Activated CD8-positive, alpha-beta memory T cell treated with anti-CD3 and anti-CD28 coated beads, Interleukin-2, amount 10 ng/mL, durations not matched to agents 7 days and 5 days (primary cell): ENCODE measurements at regions of chr19 and their contacts with region 1.

Region 1: DNA sequence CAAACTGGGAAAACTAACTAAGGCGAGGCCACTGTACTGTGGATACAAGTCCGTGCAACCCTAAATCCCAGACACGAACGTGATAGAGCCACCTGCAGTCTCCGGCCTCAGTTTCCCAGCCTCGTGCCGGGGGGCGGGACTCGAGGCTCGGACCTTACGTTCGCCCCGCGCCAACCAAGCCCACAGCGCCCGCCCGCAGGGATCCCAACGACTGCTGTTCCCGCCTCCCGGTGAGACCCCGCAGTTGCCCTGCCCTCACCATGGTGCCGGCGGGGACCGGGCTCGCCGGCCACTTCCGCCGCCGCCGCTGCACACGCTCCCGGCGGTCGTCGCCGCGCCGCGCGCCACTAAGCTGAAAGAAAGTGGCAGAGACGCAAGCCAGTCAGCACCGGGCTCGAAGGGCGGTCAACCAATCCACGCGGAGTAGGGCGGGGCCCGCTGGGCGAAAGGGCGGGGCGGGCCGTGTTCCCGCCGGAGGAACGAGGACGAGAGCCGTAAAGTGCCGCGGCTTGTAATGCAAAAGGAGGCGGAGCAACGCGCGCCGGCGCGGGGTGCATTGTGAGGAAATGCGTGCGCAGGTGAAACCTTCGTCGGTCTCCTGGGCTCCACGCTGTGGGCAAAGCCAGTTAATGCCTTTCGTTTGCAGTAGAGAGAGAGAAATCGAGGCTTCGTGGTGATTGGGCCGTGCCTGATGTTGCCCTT is at the start of gene LSM4:
- DNase-seq: peak; percentile 100
- ATAC-seq: peak; percentile 95
- H3K4me3 Mint-ChIP-seq: peak within 1 kb of the TSS; percentile 92
- H3K27ac Mint-ChIP-seq: peak within 1 kb of the TSS; percentile 97
- H3K4me1 Mint-ChIP-seq: peaks cover 55% of the 10 kb centered on the region
- H3K27me3 Mint-ChIP-seq: no peaks in the 10 kb centered on the region
- total RNA-seq, gene LSM4: 209 to 236 TPM

Region 2: DNA sequence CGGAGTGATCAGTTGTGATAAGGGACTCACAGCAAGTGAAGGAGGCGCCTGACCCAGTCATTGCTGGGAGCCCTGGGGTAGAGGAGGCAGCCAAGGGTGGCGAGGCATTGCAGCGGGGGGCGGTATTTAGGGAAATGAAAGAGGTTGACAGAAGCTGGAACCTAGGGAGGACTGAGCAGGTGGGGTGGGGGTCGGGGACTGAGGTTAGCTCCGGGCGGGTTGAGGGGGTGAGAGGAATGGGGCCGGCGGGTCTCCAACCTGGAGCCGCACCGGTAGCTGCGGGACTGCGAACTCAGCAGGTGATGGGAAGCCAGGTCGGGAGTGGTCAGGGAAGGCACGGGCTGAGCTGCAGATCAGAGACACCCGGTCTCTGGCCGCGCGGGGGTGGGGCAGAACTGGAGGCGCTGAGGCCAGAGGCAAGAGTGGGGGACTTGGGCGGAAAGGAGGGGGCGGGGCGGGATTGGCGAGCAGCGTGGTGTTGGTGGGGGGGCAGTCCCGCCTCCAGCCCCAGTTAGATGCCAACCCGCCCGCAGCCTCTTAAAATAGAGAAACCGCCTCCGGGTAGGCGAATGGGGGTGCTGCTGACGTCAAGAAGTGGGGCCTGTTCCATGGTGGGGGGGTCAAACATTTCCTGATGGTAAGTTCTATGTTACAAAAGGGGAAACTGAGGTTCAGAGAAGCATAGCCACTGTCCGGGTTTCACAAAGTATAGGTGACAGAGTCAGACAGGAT is 223.9 kb before region 1 on chr19:
- CTCF ChIA-PET with region 1: no interaction called
- DNase-seq: peak; percentile 63
- ATAC-seq: peak; percentile 16
- H3K4me3 Mint-ChIP-seq: peak overlapping the region; percentile 78
- H3K27ac Mint-ChIP-seq: no peak overlapping the region
- H3K4me1 Mint-ChIP-seq: peaks cover 28% of the 10 kb centered on the region
- H3K27me3 Mint-ChIP-seq: no peaks in the 10 kb centered on the region

Region 3: DNA sequence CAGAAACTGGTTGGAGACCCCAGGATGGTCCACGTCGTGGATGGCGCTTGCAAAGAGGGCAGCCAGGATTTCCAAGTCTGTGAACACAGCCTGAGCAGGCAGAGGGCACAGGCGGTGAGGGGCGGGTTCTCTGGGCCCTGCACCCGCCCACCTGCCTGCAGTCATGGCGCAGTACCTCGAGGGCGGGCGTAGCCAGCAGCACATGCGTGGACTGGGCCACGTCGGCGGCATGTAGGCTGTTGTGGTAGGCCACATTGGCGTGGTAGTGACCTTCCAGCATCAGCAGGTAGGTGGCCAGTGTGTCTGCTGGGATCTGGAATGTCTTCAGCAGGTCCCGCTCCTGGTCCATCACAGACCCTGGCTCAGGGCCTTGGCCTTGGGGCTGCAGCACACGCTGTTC is 104.8 kb before region 1 on chr19:
- CTCF ChIA-PET with region 1: no interaction called
- DNase-seq: no peak
- ATAC-seq: no peak
- H3K4me3 Mint-ChIP-seq: no peak overlapping the region
- H3K27ac Mint-ChIP-seq: no peak overlapping the region
- H3K4me1 Mint-ChIP-seq: peaks cover 10% of the 10 kb centered on the region
- H3K27me3 Mint-ChIP-seq: peaks cover 24% of the 10 kb centered on the region

Region 4: GRCh38 chr19:18274781-18275356 is 48.0 kb before region 1 on chr19:
- CTCF ChIA-PET with region 1: interaction called, 399 read pairs
- DNase-seq: no peak
- ATAC-seq: no peak
- H3K4me3 Mint-ChIP-seq: no peak overlapping the region
- H3K27ac Mint-ChIP-seq: no peak overlapping the region
- H3K4me1 Mint-ChIP-seq: peaks cover 37% of the 10 kb centered on the region
- H3K27me3 Mint-ChIP-seq: no peaks in the 10 kb centered on the region

Region 5: DNA sequence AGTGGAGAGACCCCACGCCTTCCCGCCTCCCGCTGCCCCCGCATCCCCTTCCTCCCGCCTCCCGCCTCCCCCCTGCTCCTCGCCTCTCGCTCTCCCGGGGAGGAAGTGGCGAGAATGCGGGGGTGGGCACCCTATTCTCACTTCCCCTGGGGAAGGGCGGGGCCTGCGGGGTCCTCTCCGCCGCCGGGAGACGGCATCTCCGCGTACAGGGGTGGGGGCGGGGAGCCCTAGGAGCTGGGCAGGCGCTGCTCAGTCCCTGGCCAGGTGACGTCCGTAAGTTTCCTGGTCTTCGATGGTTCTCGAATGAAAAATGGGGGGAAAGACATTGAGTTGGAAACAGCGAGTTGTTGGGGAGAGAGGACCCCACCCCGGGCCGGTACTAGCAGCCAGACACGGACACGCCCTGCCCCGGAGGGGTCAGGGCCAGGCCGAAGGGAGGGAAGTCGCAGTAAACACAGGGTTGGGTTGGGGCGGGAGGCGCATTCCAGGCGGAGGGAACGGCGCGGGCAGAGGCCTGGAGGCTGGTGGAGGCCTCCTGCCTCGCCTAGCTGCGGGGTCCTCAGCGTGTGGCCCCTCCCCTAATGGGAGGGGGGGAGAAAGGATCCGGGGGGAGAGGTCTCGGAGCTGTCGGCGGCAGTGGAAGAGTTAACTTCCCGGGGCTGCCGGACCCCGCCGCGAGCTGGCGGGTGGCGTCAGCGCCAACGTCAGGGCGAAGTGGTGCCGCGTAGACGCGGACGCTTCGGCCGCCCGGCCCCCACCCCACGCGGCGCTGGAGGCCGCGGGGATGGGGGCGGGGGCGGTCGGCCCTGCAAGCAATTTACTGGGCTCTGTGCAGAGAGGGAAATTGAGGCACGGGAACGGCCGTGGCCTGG is 31.1 kb before region 1 on chr19:
- CTCF ChIA-PET with region 1: interaction called, 29 read pairs
- DNase-seq: peak; percentile 94
- ATAC-seq: peak; percentile 38
- H3K4me3 Mint-ChIP-seq: peak overlapping the region; percentile 91
- H3K27ac Mint-ChIP-seq: peak overlapping the region; percentile 98
- H3K4me1 Mint-ChIP-seq: peaks cover 67% of the 10 kb centered on the region
- H3K27me3 Mint-ChIP-seq: no peaks in the 10 kb centered on the region

Region 6: DNA sequence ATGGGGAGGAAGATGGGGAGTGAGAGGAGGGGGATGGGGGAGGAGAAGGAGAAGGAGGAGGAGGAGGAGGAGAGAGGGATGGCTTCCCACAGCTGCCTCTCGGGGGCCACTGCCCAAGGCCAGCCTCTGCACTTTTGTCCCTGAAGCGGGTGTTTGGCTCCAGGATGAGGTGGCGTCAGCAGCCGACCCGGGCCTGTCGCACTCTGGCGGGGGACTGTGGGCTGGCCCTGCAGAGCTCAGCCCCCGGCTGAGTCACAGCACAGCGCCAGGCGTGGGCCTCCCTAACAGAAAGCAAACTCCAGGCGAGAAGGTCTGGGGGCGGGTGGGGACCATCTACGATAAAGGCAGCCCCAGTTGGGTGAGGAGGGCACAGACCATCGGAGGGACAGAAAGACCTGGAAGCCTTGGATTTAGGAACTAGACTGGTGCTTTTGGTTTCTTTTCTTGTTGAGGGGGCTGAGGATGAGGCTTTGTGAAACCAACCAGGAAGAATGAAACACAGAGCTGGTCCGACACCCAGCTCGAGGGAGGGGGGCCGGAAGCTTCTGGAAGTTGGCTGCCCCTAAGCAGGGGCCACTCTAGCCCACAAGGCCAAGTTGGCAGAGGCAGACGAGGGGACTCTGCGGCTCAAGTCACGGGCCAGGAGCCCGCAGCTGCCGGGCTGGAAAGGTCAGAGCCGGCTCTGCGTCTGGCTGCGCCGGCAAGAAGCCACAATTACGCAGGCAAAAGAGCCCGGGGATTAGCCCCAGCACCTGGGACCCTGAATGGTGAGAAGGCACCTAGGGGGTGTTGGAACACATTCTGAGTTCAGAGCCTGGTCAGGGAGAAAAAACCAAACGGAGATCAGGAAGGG is 18.2 kb before region 1 on chr19:
- CTCF ChIA-PET with region 1: interaction called, 22 read pairs
- DNase-seq: peak; percentile 92
- ATAC-seq: peak; percentile 79
- H3K4me3 Mint-ChIP-seq: peak overlapping the region; percentile 94
- H3K27ac Mint-ChIP-seq: peak overlapping the region; percentile 99
- H3K4me1 Mint-ChIP-seq: peaks cover 40% of the 10 kb centered on the region
- H3K27me3 Mint-ChIP-seq: no peaks in the 10 kb centered on the region

Region 7: DNA sequence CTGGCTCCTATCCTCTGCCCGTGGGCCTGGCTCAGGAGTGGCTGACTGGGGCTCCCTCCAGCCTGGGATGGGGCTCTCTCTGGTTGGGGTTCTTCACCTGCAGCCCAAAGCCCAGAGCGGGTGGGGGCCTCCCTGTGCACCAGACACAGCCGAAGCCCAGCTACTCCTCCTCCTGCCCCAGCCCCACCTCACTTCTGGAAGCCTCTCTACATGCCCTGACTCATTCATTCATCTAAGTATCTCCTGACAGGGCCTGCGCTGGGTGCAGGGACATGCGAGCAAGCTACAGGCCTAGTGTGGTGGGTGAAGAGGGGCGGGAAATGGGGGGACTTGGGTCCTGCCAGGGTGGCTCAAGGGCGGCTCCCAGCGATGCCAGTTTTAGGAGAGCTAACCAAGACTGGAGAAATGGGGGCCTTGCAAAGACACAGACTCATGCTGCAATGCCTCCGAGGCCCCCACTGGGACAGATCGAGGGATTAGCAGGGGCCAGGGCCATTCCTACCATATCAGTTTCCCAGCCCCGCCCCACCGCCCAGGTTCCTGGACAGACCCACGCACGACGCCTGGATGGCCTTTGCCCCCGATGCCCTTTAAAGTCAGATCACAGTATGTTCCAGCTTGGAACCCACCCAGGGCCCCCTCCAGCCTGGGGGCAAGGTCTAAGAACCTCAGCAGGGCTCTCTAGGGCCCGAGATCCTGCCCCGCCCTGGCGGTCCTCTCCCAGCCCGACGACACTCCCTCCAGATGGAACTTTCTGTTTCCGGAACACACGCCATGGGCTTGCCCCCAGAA is 12.6 kb before region 1 on chr19:
- CTCF ChIA-PET with region 1: interaction called, 22 read pairs
- DNase-seq: no peak
- ATAC-seq: no peak
- H3K4me3 Mint-ChIP-seq: no peak overlapping the region
- H3K27ac Mint-ChIP-seq: peak overlapping the region; percentile 36
- H3K4me1 Mint-ChIP-seq: peaks cover 40% of the 10 kb centered on the region
- H3K27me3 Mint-ChIP-seq: no peaks in the 10 kb centered on the region

Region 8: GRCh38 chr19:18401580-18402112 is 78.7 kb after region 1 on chr19:
- CTCF ChIA-PET with region 1: no interaction called
- DNase-seq: no peak
- ATAC-seq: peak; percentile 54
- H3K4me3 Mint-ChIP-seq: no peak overlapping the region
- H3K27ac Mint-ChIP-seq: no peak overlapping the region
- H3K4me1 Mint-ChIP-seq: peaks cover 20% of the 10 kb centered on the region
- H3K27me3 Mint-ChIP-seq: peaks cover 14% of the 10 kb centered on the region

Region 9: GRCh38 chr19:18571564-18572300 is 248.8 kb after region 1 on chr19 and contains the start of gene UBA52:
- CTCF ChIA-PET with region 1: no interaction called
- DNase-seq: peak; percentile 99
- ATAC-seq: peak; percentile 93
- H3K4me3 Mint-ChIP-seq: peak within 1 kb of the TSS; percentile 85
- H3K27ac Mint-ChIP-seq: peak within 1 kb of the TSS; percentile 91
- H3K4me1 Mint-ChIP-seq: peaks cover 34% of the 10 kb centered on the region
- H3K27me3 Mint-ChIP-seq: no peaks in the 10 kb centered on the region
- total RNA-seq, gene UBA52: 1,256 to 1,325 TPM